ENCODE measurements at regions of chr5 and their contacts with region 1.

Region 1: DNA sequence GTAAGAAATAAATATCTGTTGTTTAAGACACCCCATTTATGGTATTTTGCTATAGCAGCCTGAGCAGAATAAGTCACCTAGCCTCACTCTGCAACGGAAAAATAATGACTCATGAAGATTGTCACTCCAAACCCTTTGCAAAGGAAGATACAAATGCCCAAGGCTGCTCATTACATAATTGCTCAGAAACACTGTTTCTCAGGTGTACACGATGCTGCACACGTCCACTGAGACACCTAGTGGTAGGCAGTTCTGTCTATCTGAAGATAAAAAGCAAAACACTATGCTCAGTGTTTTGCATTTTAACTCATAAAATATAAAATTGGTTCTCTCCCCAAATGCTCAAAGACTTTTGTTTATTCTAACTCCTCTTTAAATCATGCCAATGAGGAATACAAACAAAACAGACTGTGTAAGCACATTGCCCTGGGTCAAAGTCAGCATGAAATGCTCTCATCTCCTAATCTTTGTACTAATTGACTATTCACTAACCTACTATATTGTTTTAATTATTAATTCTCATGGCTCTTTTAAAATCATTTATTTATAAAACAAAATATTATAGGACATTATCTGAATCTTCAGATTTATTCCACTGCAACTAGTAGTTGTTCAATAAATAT is 7.7 kb upstream of the TSLP start:
- DNase-seq: no peak
- H3K4me3 ChIP-seq: no peak overlapping the region
- H3K27ac ChIP-seq: no peak overlapping the region
- H3K27me3 ChIP-seq: no peaks in the 10 kb centered on the region
- CTCF ChIP-seq: peak; percentile 53

Region 2: DNA sequence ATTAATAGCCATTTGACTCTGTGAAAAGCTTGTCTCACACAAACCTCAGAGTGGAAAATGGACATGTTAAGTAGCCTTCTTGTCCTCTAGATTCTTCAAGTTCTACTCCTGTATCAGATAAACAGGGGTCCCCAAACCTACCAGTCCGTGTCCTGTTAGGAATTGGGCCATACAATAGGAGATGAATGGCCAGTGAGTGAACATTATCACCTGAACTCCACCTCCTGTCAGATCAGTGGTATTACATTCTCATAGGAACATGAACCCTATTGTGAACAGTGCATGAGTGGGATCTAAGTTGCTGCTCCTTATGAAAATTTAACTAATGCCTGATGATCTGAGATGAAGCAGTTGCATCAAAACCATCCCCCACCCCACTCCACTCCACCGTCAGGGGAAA is 473.6 kb before region 1 on chr5:
- CTCF ChIA-PET with region 1: no interaction called
- POLR2A ChIA-PET with region 1: no interaction called
- DNase-seq: no peak
- H3K4me3 ChIP-seq: no peak overlapping the region
- H3K27ac ChIP-seq: no peak overlapping the region
- H3K27me3 ChIP-seq: no peaks in the 10 kb centered on the region
- CTCF ChIP-seq: peak; percentile 51

Region 3: DNA sequence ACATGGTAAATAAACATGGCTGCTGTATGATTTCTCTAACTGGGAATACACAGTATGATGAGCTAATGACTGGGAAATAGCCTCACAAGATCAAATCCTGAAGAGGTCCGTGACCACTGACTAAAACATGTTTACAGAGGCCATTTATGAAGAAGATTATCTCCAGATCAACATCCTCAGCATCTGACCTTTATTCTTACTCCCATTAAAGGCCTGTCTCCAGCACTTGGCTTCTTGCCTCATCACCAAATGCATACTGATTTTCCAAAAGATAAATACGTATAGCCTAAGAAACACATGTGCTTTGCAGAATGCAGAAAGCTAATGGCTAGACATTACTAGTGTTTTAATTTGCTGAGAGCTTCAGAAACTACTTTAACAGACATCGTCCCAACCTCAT is 100.3 kb before region 1 on chr5:
- CTCF ChIA-PET with region 1: no interaction called
- POLR2A ChIA-PET with region 1: interaction called, 14 read pairs
- DNase-seq: no peak
- H3K4me3 ChIP-seq: no peak overlapping the region
- H3K27ac ChIP-seq: no peak overlapping the region
- H3K27me3 ChIP-seq: no peaks in the 10 kb centered on the region
- CTCF ChIP-seq: no peak

Region 4: GRCh38 chr5:111043712-111044506 is 19.9 kb before region 1 on chr5:
- CTCF ChIA-PET with region 1: interaction called, 16 read pairs
- POLR2A ChIA-PET with region 1: no interaction called
- DNase-seq: peak; percentile 67
- H3K4me3 ChIP-seq: no peak overlapping the region
- H3K27ac ChIP-seq: no peak overlapping the region
- H3K27me3 ChIP-seq: no peaks in the 10 kb centered on the region
- CTCF ChIP-seq: peak; percentile 31; the same call in 1 of the 2 replicates

Measured in AG04450 (cell line).